A673 (cell line): ENCODE measurements at regions of chr6 and their contacts with region 1.

Region 1: GRCh38 chr6:108896111-108896661 is 48.0 kb downstream of the ARMC2 start:
- DNase-seq: no peak
- H3K4me3 ChIP-seq: no peak overlapping the region
- H3K27ac ChIP-seq: no peak overlapping the region
- H3K4me1 ChIP-seq: peaks cover 10% of the 10 kb centered on the region
- H3K27me3 ChIP-seq: no peaks in the 10 kb centered on the region
- CTCF ChIP-seq: no peak

Region 2: DNA sequence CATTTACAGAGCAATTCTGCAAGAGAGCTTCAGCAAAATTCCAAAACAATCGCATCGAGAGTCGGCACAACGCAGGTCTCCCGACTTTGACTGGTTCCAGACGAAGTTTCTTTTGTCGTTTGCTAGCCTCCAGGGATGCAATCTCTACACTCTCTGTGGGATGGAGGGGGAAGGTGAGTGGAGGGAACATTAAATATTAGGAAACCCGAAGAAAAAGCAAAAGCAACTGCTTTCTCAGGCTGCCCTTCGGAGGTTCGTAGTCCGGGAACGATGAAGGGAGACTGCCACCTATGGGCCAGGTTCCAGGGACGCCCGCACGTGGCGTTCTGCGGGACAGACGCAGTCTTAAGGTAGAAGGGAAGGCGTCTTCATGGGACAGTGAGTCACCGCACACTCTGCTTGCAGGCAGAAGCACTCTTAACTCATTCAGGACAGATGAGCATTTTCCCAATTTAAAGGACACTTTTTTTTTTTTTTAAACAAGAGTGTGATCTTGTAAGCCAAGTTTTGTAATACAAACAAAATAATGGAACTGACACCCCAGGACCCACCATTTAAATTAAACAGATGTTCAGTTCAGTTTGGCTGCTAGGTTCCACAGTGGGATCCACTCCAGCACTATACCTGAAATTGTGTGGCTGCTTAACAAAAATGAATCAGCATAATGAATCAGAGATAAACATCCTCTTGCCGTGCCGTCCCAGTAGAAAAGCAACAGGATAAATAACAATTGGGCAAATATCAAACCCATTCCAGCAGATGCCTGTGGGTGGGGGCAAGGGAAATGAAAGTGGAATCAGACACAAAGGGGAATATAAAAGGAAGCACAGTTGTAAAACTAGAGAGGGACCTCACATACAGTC is 113.8 kb before region 1 on chr6:
- CTCF ChIA-PET with region 1: no interaction called
- POLR2A ChIA-PET with region 1: no interaction called
- intact Hi-C with region 1: loop called (anchors 5 kb)
- DNase-seq: peak; percentile 83
- H3K4me3 ChIP-seq: peak overlapping the region; percentile 46
- H3K27ac ChIP-seq: no peak overlapping the region
- H3K4me1 ChIP-seq: peaks cover 18% of the 10 kb centered on the region
- H3K27me3 ChIP-seq: no peaks in the 10 kb centered on the region
- CTCF ChIP-seq: peak; percentile 91

Region 3: GRCh38 chr6:108850669-108851465 is 45.3 kb before region 1 on chr6:
- CTCF ChIA-PET with region 1: no interaction called
- POLR2A ChIA-PET with region 1: no interaction called
- intact Hi-C with region 1: no loop called
- DNase-seq: no peak
- H3K4me3 ChIP-seq: no peak overlapping the region
- H3K27ac ChIP-seq: no peak overlapping the region
- H3K4me1 ChIP-seq: peaks cover 12% of the 10 kb centered on the region
- H3K27me3 ChIP-seq: no peaks in the 10 kb centered on the region
- CTCF ChIP-seq: no peak

Region 4: DNA sequence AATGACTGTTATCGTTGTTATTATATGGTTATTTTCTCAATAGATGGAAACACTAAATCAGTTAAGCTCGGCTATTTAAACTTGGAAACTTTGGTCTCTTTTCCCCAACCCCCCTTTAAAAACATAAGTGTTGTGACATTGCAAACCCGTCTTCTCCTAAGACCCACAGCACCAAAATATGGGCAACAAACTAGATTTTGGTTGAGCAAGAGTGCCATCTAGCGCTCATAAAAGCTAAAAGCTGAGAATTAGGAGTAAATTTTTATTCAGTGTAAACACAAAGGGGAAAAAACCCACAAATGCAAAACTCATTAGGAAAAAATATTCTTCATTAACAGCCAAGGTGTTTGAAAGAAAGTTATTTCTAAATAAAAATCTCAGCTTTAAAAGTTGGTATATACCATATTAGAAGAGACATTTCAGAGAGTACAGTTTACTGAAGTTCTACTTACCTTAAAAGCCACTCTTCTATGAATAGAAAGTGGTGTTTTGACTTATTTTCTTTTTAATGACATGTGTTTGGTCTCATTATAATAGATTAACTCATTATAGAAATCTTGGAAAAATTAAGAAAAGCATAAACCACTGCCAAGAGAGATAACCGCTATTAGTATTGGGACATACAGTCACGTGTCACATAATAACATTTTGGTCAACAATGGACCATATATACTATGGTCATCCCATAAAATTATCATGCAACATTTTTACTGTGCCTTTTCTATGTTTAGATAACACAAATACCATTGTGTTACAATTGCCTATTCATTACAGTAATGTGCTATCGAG is 177.4 kb after region 1 on chr6:
- CTCF ChIA-PET with region 1: interaction called, 4 read pairs
- POLR2A ChIA-PET with region 1: no interaction called
- intact Hi-C with region 1: loop called (anchors 5 kb)
- DNase-seq: peak; percentile 77
- H3K4me3 ChIP-seq: no peak overlapping the region
- H3K27ac ChIP-seq: no peak overlapping the region
- H3K4me1 ChIP-seq: peaks cover 3% of the 10 kb centered on the region
- H3K27me3 ChIP-seq: no peaks in the 10 kb centered on the region
- CTCF ChIP-seq: peak; percentile 71

Region 5: GRCh38 chr6:109382576-109383437 is 486.6 kb after region 1 on chr6:
- CTCF ChIA-PET with region 1: no interaction called
- POLR2A ChIA-PET with region 1: no interaction called
- intact Hi-C with region 1: no loop called
- DNase-seq: peak; percentile 97
- H3K4me3 ChIP-seq: peak overlapping the region; percentile 94
- H3K27ac ChIP-seq: peak overlapping the region; percentile 99
- H3K4me1 ChIP-seq: peaks cover 18% of the 10 kb centered on the region
- H3K27me3 ChIP-seq: no peaks in the 10 kb centered on the region
- CTCF ChIP-seq: peak; percentile 73